Activated CD8-positive, alpha-beta T cell treated with anti-CD3 and anti-CD28 coated beads for 36 hours (primary cell): ENCODE measurements at regions of chr5 and their contacts with region 1.

Region 1: GRCh38 chr5:154215571-154216325 is 25.2 kb downstream of the GALNT10 start:
- DNase-seq: no peak
- ATAC-seq: no peak
- H3K4me3 Mint-ChIP-seq: no peak overlapping the region
- H3K27ac Mint-ChIP-seq: no peak overlapping the region
- H3K4me1 Mint-ChIP-seq: peaks cover 43% of the 10 kb centered on the region
- H3K27me3 Mint-ChIP-seq: no peaks in the 10 kb centered on the region
- CTCF ChIP-seq: no peak

Region 2: GRCh38 chr5:154196955-154197652 is 18.6 kb before region 1 on chr5:
- CTCF ChIA-PET with region 1: interaction called, 11 read pairs
- POLR2A ChIA-PET with region 1: interaction called, 9 read pairs
- intact Hi-C with region 1: no loop called
- DNase-seq: no peak
- ATAC-seq: no peak
- H3K4me3 Mint-ChIP-seq: no peak overlapping the region
- H3K27ac Mint-ChIP-seq: peak overlapping the region; percentile 83
- H3K4me1 Mint-ChIP-seq: peaks cover 60% of the 10 kb centered on the region
- H3K27me3 Mint-ChIP-seq: no peaks in the 10 kb centered on the region
- CTCF ChIP-seq: no peak

Region 3: DNA sequence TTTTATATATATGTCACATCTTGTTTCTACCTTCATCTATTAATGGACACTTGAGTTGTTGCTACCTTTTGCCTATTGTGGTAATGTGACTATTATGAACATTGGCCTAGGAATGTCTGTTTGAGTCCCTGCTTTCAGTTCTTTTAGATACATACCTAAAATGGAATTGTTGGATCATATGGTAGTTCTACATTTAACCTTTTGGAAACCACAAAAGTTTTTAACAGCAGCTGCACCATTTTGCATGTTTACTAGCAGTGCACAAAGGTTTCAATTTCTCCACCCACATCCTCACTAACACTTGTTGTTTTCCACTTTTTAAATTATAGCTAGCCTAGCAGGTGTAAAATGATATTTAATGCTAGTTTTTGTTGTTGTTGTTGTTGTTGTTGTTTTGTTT is 63.2 kb after region 1 on chr5:
- CTCF ChIA-PET with region 1: no interaction called
- POLR2A ChIA-PET with region 1: no interaction called
- intact Hi-C with region 1: no loop called
- DNase-seq: no peak
- ATAC-seq: no peak
- H3K4me3 Mint-ChIP-seq: no peak overlapping the region
- H3K27ac Mint-ChIP-seq: no peak overlapping the region
- H3K4me1 Mint-ChIP-seq: peaks cover 28% of the 10 kb centered on the region
- H3K27me3 Mint-ChIP-seq: no peaks in the 10 kb centered on the region
- CTCF ChIP-seq: no peak